ENCODE measurements at regions of chr18 and their contacts with region 1.

Region 1: DNA sequence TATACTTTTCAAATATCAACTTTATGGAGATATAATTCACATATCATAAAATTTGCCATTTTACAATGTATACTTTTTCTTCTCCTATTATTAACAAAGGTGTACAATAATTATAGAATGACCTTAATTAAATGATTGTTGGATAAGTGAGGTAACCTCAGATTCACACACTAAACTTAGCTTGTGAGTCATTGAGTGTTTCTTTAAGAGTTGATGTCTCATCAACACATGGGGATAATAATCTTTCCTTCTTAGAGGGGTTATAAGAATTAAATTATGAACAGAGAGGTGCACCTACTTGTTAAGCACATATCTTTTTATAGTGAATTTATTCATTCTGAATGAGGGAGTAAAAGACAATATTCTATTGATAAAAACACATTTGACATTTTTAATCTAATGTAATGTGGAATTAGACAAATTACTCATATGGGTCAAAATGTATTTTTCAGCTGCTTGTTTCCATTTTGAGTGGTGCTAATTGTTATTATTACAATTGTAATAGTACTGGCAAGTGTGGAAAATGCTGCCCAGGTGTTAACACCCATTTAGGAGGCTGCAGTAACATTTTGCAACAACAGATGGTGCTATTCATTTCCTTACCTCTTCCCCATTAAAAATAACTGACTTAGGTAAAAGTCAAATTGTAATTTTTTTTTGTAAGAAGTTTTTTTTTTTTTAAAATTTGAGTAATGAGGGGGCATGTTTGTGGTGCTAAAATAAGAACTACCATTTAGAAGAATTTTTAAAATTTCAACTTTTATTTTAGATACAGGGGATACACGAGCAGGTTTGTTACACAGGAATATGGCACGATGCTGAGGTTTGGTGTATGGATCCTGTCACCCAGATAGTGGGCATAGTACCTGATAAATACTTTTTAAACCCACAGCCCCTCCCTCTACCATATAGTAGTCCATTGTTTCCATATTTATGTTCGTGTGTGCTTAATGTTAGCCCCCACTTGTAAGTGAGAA is 32.1 kb upstream of the DYNAP start:
- DNase-seq: peak; percentile 12
- H3K4me3 ChIP-seq: no peak overlapping the region
- H3K27ac ChIP-seq: no peak overlapping the region
- H3K4me1 ChIP-seq: no peaks in the 10 kb centered on the region
- H3K27me3 ChIP-seq: no peaks in the 10 kb centered on the region
- CTCF ChIP-seq: peak; percentile 71

Region 2: GRCh38 chr18:54392543-54393023 is 166.3 kb before region 1 on chr18:
- CTCF ChIA-PET with region 1: no interaction called
- POLR2A ChIA-PET with region 1: no interaction called
- intact Hi-C with region 1: loop called (anchors 10 kb)
- DNase-seq: peak; percentile 82
- H3K4me3 ChIP-seq: no peak overlapping the region
- H3K27ac ChIP-seq: no peak overlapping the region
- H3K4me1 ChIP-seq: peaks cover 15% of the 10 kb centered on the region
- H3K27me3 ChIP-seq: no peaks in the 10 kb centered on the region
- CTCF ChIP-seq: peak; percentile 76

Region 3: GRCh38 chr18:54622084-54622483 is 63.2 kb after region 1 on chr18:
- CTCF ChIA-PET with region 1: no interaction called
- POLR2A ChIA-PET with region 1: no interaction called
- intact Hi-C with region 1: loop called (anchors 10 kb)
- DNase-seq: no peak
- H3K4me3 ChIP-seq: no peak overlapping the region
- H3K27ac ChIP-seq: no peak overlapping the region
- H3K4me1 ChIP-seq: no peaks in the 10 kb centered on the region
- H3K27me3 ChIP-seq: no peaks in the 10 kb centered on the region
- CTCF ChIP-seq: no peak

Region 4: GRCh38 chr18:54647176-54647575 is 88.3 kb after region 1 on chr18:
- CTCF ChIA-PET with region 1: no interaction called
- POLR2A ChIA-PET with region 1: no interaction called
- intact Hi-C with region 1: loop called (anchors 5 kb)
- DNase-seq: peak; percentile 32
- H3K4me3 ChIP-seq: no peak overlapping the region
- H3K27ac ChIP-seq: no peak overlapping the region
- H3K4me1 ChIP-seq: no peaks in the 10 kb centered on the region
- H3K27me3 ChIP-seq: peaks cover 17% of the 10 kb centered on the region
- CTCF ChIP-seq: peak; percentile 46

Region 5: GRCh38 chr18:54679318-54680149 is 120.6 kb after region 1 on chr18:
- CTCF ChIA-PET with region 1: no interaction called
- POLR2A ChIA-PET with region 1: no interaction called
- intact Hi-C with region 1: loop called (anchors 10 kb)
- DNase-seq: peak; percentile 74
- H3K4me3 ChIP-seq: no peak overlapping the region
- H3K27ac ChIP-seq: no peak overlapping the region
- H3K4me1 ChIP-seq: no peaks in the 10 kb centered on the region
- H3K27me3 ChIP-seq: no peaks in the 10 kb centered on the region
- CTCF ChIP-seq: peak; percentile 63

Region 6: GRCh38 chr18:54742659-54743604 is 184.0 kb after region 1 on chr18:
- CTCF ChIA-PET with region 1: no interaction called
- POLR2A ChIA-PET with region 1: no interaction called
- intact Hi-C with region 1: no loop called
- DNase-seq: no peak
- H3K4me3 ChIP-seq: no peak overlapping the region
- H3K27ac ChIP-seq: no peak overlapping the region
- H3K4me1 ChIP-seq: no peaks in the 10 kb centered on the region
- H3K27me3 ChIP-seq: no peaks in the 10 kb centered on the region
- CTCF ChIP-seq: no peak

Region 7: GRCh38 chr18:54983041-54983686 is 424.3 kb after region 1 on chr18:
- CTCF ChIA-PET with region 1: no interaction called
- POLR2A ChIA-PET with region 1: no interaction called
- intact Hi-C with region 1: loop called (anchors 5 kb)
- DNase-seq: peak; percentile 75
- H3K4me3 ChIP-seq: no peak overlapping the region
- H3K27ac ChIP-seq: no peak overlapping the region
- H3K4me1 ChIP-seq: no peaks in the 10 kb centered on the region
- H3K27me3 ChIP-seq: no peaks in the 10 kb centered on the region
- CTCF ChIP-seq: peak; percentile 76

Region 8: DNA sequence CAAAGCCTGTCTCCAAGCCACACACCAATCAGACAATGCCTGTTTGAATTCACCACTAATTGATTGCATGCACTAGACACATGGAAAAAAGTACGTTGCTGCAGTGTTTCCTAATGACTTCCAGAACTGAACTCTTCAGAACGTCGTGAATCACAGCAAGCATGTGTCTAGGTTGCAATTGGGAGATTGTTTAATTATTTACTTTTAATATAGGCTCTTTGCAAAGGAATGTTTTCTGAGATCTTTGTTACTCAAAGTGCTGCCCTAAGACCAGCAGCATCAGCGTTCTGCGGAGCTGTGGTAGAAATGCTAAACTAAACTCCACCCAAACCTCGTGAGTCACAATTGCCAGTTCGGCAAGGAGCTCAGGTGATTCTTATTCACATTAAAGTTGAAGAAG is 453.1 kb after region 1 on chr18:
- CTCF ChIA-PET with region 1: no interaction called
- POLR2A ChIA-PET with region 1: no interaction called
- intact Hi-C with region 1: no loop called
- DNase-seq: no peak
- H3K4me3 ChIP-seq: no peak overlapping the region
- H3K27ac ChIP-seq: no peak overlapping the region
- H3K4me1 ChIP-seq: no peaks in the 10 kb centered on the region
- H3K27me3 ChIP-seq: peaks cover under 1% of the 10 kb centered on the region
- CTCF ChIP-seq: no peak

Measured in A673 (cell line).